Activated CD4-positive, alpha-beta memory T cell treated with anti-CD3 and anti-CD28 coated beads for 36 hours (primary cell): ENCODE measurements at regions of chr10 and their contacts with region 1.

Region 1: DNA sequence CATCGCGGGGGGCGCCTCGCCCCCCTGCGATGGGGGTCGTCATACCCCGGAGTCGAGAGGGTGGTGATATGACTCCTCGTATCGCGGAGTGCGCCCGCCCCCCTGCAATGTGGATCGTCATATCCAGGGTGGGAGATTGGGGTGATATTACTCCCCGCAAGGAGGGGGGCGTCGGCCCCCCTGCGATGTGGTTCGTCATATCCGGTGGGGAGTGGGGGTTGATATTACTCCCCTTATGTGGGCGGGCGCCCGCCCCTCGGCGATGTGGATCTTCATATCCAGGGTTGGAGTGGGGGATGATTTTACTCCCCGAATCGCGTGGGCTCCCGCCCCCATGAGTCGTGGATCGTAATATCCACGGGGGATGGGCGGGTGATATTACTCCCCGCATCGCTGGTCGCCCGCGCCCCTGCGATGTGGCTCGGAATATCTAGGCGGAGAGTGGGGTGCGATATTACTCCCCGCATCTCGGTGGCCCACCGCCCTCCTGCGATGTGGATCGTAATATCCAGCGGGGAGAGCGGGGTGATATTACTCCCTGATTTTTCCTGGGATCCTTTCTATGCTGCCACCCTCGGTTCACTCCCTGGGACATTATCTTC is 36.9 kb downstream of the MEIG1 start:
- DNase-seq: no peak
- H3K4me3 Mint-ChIP-seq: no peak overlapping the region
- H3K27ac Mint-ChIP-seq: no peak overlapping the region
- H3K4me1 Mint-ChIP-seq: peaks cover 4% of the 10 kb centered on the region
- H3K27me3 Mint-ChIP-seq: peaks cover 3% of the 10 kb centered on the region

Region 2: DNA sequence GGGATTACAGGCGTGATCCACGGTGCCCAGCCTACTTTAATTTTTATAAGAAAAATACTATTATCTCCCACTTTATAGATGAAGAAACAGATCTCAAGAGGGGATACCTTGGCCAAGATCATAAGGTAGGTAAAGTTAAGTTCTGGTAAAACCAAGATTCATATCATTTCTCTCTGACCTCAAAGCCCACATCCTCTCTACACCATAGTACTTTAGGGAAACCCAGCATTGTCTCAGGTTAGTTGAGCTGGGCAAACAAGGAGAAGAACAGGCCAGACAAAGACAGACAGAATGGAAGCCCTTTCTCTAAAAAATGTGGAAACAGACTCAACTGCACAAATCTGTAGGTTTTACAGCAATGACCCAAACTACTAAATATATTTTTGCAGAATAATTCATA is 467.6 kb before region 1 on chr10:
- CTCF ChIA-PET with region 1: no interaction called
- POLR2A ChIA-PET with region 1: no interaction called
- intact Hi-C with region 1: no loop called
- DNase-seq: no peak
- H3K4me3 Mint-ChIP-seq: peak overlapping the region; percentile 50
- H3K27ac Mint-ChIP-seq: peak overlapping the region; percentile 80
- H3K4me1 Mint-ChIP-seq: peaks cover 89% of the 10 kb centered on the region
- H3K27me3 Mint-ChIP-seq: no peaks in the 10 kb centered on the region

Region 3: GRCh38 chr10:15106352-15107013 is 110.4 kb after region 1 on chr10:
- CTCF ChIA-PET with region 1: interaction called, 10 read pairs
- POLR2A ChIA-PET with region 1: no interaction called
- intact Hi-C with region 1: loop called (anchors 1 kb)
- DNase-seq: peak; percentile 79
- H3K4me3 Mint-ChIP-seq: no peak overlapping the region
- H3K27ac Mint-ChIP-seq: peak overlapping the region; percentile 51
- H3K4me1 Mint-ChIP-seq: peaks cover 10% of the 10 kb centered on the region
- H3K27me3 Mint-ChIP-seq: no peaks in the 10 kb centered on the region

Region 4: GRCh38 chr10:15370856-15371701 is 375.0 kb after region 1 on chr10 and contains the start of gene FAM171A1:
- CTCF ChIA-PET with region 1: no interaction called
- POLR2A ChIA-PET with region 1: no interaction called
- intact Hi-C with region 1: loop called (anchors 10 kb)
- DNase-seq: peak; percentile 76
- H3K4me3 Mint-ChIP-seq: peak within 1 kb of the TSS; percentile 70
- H3K27ac Mint-ChIP-seq: no peak within 1 kb of the TSS
- H3K4me1 Mint-ChIP-seq: peaks cover 9% of the 10 kb centered on the region
- H3K27me3 Mint-ChIP-seq: peaks cover 16% of the 10 kb centered on the region
- total RNA-seq, gene FAM171A1: 3.3 to 4.0 TPM